HCT116 (cell line): ENCODE measurements at regions of chr2 and their contacts with region 1.

Region 1: GRCh38 chr2:166417669-166418068 is 41.9 kb upstream of the SCN9A start:
- DNase-seq: peak; percentile 39
- ATAC-seq: 0 out of 2 replicates have a peak, but pooled peaks have one; percentile 40
- H3K4me3 ChIP-seq: no peak overlapping the region
- H3K27ac ChIP-seq: no peak overlapping the region
- H3K4me1 ChIP-seq: no peaks in the 10 kb centered on the region
- H3K27me3 ChIP-seq: no peaks in the 10 kb centered on the region; the same call in 1 of the 2 replicates
- CTCF ChIP-seq: no peak
- POLR2A ChIP-seq: no peak
- RAD21 ChIP-seq: no peak

Region 2: DNA sequence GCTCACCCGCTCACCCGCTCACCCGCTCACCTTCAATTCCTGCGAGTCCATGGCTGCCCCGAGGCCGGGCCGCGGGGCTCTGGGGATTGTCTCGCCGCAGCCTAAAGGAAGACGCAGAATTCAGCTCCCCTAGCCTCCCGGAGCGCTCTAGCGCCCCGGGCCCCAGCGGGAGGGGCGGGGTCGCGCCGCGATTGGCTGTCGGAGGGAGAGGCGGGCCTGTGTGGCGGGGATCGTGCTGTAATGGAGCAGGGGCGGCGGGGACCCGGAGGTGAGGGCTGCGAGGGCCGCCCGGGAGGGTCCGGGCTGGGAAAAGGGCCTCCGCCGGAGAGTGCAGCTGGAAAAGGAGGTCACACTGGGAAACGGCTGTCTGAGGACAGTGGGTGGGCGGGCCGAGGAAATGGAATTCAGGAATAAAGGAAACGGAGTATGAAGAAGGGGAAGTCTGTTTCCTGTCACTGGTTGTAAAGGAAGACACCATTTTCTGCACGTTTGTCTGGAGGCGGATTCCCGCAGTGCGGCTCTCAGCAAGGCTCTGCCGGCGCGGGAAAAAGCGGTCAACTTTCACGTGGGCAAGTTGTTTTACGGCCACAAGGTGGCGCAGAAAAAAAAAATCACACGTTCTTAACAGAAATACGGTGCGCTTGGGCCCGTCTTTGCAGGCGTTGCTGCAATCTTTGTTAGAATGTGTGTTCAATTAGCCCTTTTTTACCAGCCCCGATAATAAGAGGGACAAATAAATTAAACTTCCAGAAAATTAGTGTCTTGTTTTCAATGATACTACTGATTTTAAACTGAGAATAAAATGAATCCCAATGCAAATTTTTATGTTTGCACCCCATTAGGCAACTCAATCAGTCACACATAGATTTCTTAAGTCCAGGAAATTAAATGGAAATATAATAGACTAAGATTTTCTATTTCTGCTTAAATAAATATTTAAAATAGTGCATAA is 463.7 kb before region 1 on chr2 and contains the start of gene TTC21B:
- CTCF ChIA-PET with region 1: interaction called, 6 read pairs
- POLR2A ChIA-PET with region 1: no interaction called
- RAD21 ChIA-PET with region 1: no interaction called
- intact Hi-C with region 1: loop called (anchors 5 kb)
- DNase-seq: peak; percentile 92
- ATAC-seq: peak; percentile 95
- H3K4me3 ChIP-seq: peak within 1 kb of the TSS; percentile 66 to 75
- H3K27ac ChIP-seq: peak within 1 kb of the TSS; percentile 31; the same call in 1 of the 2 replicates
- H3K4me1 ChIP-seq: peaks cover 0 to 15% of the 10 kb centered on the region in 2 experiments; a peak in 2 of 4 replicates
- H3K27me3 ChIP-seq: no peaks in the 10 kb centered on the region
- CTCF ChIP-seq: peak; percentile 65 to 74 (median 71)
- POLR2A ChIP-seq: peak; percentile 42
- RAD21 ChIP-seq: peak; percentile 57
- total RNA-seq, gene TTC21B: 12.2 TPM

Region 3: DNA sequence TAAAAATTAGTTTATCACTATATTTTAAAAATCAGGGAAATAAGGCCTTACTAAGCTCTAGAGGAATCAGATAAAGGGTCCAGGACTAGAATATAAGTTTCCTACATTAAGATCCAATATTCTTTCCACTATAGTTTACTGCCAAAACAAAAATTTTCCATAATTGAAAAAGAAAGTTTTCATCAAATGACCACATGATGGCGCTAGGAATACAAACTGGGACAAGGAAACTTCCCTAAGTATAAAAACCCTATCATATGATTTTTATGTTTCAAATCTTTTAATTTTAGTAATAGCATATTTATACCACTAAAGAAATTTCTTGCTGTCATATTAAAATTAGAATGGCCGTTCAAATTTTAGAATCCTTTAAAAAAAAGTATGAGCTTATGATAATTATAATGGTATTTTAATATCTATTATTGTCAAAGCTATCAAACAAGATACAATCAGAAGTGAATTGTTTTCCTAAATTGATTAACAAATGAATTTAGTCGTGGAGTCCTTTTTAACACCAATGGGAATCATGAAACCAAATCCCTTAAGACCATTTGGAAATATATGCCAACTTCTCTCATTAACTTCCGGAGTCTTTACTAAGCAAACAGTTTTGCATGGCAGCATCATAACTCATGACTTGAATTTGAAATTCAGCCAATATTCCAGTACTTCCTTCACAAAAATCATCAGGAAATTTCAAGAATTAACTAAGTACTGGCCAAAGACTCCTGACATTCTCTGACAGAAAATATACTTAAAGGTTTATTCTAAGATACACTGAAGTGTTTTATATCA is 360.1 kb before region 1 on chr2:
- CTCF ChIA-PET with region 1: interaction called, 15 read pairs
- POLR2A ChIA-PET with region 1: no interaction called
- RAD21 ChIA-PET with region 1: no interaction called
- intact Hi-C with region 1: loop called (anchors 2 kb)
- DNase-seq: no peak
- ATAC-seq: peak; percentile 44; the same call in 1 of the 2 replicates
- H3K4me3 ChIP-seq: no peak overlapping the region
- H3K27ac ChIP-seq: no peak overlapping the region
- H3K4me1 ChIP-seq: no peaks in the 10 kb centered on the region
- H3K27me3 ChIP-seq: peaks cover 36% of the 10 kb centered on the region
- CTCF ChIP-seq: peak; percentile 41 to 56 (median 54); a peak in 5 of 6 replicates
- POLR2A ChIP-seq: no peak
- RAD21 ChIP-seq: peak; percentile 56

Region 4: DNA sequence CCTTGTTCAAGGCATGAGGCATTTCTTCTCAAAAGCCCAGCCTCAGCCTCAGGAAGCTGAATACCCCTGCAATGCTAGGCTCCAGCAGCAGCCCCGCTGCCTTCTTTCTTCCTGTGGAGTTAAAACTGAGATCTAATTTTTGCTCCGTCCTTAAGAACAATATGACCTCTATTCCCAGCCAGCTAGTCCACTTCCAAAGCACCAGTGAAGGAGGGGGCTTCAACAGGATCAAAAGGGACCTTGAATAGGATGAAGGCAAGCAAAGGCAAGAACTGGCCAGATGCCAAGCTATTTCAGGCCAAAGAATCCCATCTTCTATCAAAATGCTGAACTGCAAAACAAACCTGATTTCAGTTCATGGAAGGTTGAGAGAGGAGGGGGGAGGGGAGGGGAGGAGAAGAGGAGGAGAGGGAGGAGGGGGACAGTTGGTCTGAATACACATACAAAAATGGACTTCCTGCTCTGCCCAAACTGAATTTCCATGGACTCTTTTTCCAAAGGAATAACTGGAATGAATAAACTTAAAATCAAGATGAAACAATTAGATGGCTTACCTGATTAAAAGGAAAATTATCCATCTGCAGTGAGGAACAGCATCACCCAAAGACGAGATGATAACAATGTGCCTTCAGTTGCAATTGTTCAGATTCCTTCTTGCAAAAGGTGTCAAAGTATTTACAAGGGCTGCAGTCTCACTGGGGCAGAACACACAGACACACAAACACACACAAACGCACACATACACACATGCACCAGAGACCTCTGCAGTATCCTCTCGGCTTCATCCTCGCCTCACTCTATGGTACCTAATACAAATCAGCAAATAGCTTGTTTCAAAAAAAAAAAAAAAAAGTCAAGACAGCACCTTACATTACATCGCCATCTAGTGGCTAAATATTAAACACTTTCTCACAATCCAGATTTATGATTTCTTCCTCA is 290.2 kb before region 1 on chr2 and contains the start of gene SCN1A:
- CTCF ChIA-PET with region 1: interaction called, 15 read pairs
- POLR2A ChIA-PET with region 1: no interaction called
- RAD21 ChIA-PET with region 1: no interaction called
- intact Hi-C with region 1: no loop called
- DNase-seq: peak; percentile 32
- ATAC-seq: peak; percentile 70
- H3K4me3 ChIP-seq: no peak within 1 kb of the TSS
- H3K27ac ChIP-seq: no peak within 1 kb of the TSS
- H3K4me1 ChIP-seq: no peaks in the 10 kb centered on the region
- H3K27me3 ChIP-seq: peaks cover 62% of the 10 kb centered on the region
- CTCF ChIP-seq: peak; percentile 43 to 73 (median 49); a peak in 4 of 6 replicates
- POLR2A ChIP-seq: no peak
- RAD21 ChIP-seq: peak; percentile 70
- total RNA-seq, gene SCN1A: not detected

Region 5: DNA sequence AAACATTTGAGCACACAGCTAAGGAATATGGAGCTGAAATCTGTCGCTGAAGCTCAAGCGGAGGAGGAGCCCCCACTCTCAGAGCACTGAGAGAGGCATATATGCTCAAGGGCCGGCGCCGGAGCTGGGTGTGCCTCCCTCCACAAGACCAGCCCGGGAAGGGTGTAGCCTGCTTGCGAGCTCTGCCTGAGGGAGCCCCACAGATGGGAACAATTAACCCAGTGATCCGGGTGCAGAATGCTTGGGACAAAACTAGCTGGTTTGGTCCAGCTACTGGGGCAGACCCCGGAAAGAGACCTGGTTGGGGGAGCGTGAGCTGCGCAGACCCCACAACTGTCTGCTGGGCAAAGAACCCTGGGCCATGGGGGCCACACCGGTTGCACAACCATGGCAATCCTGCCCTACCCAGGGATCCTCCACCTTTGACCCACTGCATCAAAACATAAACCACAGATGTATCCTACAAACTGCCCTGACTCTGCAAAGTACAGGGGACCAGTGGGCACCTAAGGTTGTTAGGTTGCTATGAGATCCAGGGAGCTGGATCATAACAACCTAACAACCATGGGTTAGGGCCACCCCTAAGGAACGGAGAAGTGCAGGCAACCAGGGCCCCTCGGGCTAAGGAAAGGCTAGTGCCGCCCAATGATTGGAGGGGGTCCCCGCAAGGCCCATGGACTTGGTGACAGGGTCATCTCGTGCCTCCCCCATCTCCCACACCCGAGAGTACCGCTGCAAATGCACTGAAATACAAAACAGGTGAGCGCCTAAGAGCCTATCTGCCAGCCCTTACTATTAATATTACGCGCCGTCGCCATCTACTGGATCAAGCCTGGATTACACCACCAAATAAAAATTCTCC is 236.5 kb before region 1 on chr2:
- CTCF ChIA-PET with region 1: interaction called, 20 read pairs
- POLR2A ChIA-PET with region 1: no interaction called
- RAD21 ChIA-PET with region 1: no interaction called
- intact Hi-C with region 1: loop called (anchors 2 kb)
- DNase-seq: peak; percentile 13
- ATAC-seq: peak; percentile 95
- H3K4me3 ChIP-seq: no peak overlapping the region
- H3K27ac ChIP-seq: no peak overlapping the region
- H3K4me1 ChIP-seq: no peaks in the 10 kb centered on the region
- H3K27me3 ChIP-seq: peaks cover 19% of the 10 kb centered on the region; the same call in 1 of the 2 replicates
- CTCF ChIP-seq: peak; percentile 40 to 67 (median 62); a peak in 5 of 6 replicates
- POLR2A ChIP-seq: no peak
- RAD21 ChIP-seq: peak; percentile 54

Region 6: DNA sequence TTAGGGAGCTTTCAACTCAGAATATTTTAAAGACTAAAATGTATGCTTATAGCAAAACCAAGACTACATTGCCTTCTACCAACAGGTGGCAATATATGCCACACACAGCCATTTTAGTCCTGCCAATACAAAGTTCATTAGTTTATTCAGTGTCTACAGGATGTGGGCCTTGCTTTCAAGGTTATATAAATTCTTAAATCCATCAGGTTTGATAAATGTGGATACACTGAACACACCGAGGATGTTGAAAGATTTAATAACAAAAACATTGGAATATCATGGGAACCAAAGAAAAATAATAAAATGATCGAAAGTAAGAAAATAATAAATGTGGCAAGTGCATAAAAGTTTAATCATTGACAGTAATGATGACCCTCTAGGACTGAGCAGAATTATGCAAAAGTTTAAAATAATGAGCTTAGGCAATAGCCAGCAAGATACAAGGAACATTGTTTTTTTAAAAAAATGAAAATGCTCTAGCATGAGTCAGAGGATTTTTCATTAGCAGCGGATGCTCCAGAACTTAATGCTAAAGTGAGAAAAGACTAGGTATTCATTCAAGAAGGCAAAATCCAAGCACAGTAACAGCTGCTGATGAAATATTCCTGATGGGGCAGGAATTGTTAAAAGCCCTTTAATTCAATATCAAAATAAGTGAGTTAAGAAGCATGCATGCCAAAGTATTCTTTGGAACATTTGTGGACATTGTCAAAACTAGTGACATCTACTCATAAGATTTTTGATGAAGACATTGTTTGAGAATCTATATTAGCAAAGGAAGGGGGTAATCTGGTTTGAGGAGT is 56.1 kb before region 1 on chr2:
- CTCF ChIA-PET with region 1: interaction called, 13 read pairs
- POLR2A ChIA-PET with region 1: no interaction called
- RAD21 ChIA-PET with region 1: interaction called, 3 to 4 read pairs
- intact Hi-C with region 1: loop called (anchors 1 kb)
- DNase-seq: peak; percentile 26
- ATAC-seq: peak; percentile 75
- H3K4me3 ChIP-seq: no peak overlapping the region
- H3K27ac ChIP-seq: no peak overlapping the region
- H3K4me1 ChIP-seq: no peaks in the 10 kb centered on the region
- H3K27me3 ChIP-seq: peaks cover 13% of the 10 kb centered on the region; the same call in 1 of the 2 replicates
- CTCF ChIP-seq: peak; percentile 46 to 63 (median 62)
- POLR2A ChIP-seq: no peak
- RAD21 ChIP-seq: peak; percentile 53

Region 7: DNA sequence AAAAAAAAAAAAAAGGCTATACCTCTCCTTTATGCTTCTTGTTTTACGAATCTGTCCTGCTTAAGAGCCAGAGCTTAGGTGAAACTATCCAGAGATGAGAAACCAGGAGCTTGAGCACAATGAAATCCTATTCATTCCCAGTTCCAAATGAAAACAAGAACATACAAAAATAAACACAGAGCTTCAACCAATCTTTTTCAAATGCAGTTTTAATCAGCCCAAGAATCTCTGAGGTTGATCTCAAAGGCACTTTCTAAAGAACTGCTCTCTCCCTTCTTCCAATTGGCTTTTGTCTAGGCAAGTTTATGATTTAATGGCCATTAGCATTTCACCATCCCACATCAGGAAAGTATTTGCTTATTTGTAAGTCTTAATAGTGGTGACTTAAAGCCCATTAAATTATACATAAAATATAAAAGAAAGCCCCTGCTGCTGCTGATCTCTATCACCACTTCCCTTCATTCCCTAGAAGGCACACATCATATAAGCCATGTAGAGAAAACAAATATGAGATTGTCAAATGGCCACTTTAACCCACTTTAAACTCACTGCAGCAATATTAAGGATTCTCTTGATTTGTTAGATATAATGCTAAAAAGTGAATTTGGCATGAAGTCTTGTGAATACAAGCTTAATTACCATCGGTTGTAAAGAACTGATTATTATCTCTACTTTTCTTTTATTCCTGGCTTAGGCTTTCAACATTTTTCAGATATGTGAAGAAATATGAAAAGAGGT is 12.7 kb before region 1 on chr2:
- CTCF ChIA-PET with region 1: no interaction called
- POLR2A ChIA-PET with region 1: no interaction called
- RAD21 ChIA-PET with region 1: no interaction called
- intact Hi-C with region 1: no loop called
- DNase-seq: no peak
- ATAC-seq: no peak
- H3K4me3 ChIP-seq: no peak overlapping the region
- H3K27ac ChIP-seq: no peak overlapping the region
- H3K4me1 ChIP-seq: no peaks in the 10 kb centered on the region
- H3K27me3 ChIP-seq: peaks cover 25% of the 10 kb centered on the region; the same call in 1 of the 2 replicates
- CTCF ChIP-seq: no peak
- POLR2A ChIP-seq: no peak
- RAD21 ChIP-seq: no peak

Region 8: GRCh38 chr2:166671235-166671634 is 253.6 kb after region 1 on chr2:
- CTCF ChIA-PET with region 1: no interaction called
- POLR2A ChIA-PET with region 1: no interaction called
- RAD21 ChIA-PET with region 1: no interaction called
- intact Hi-C with region 1: no loop called
- DNase-seq: no peak
- ATAC-seq: no peak
- H3K4me3 ChIP-seq: no peak overlapping the region
- H3K27ac ChIP-seq: no peak overlapping the region
- H3K4me1 ChIP-seq: no peaks in the 10 kb centered on the region
- H3K27me3 ChIP-seq: no peaks in the 10 kb centered on the region
- CTCF ChIP-seq: no peak
- POLR2A ChIP-seq: no peak
- RAD21 ChIP-seq: no peak